A549 (cell line): ENCODE measurements at regions of chr11 and their contacts with region 1.

Region 1: GRCh38 chr11:34653826-34654490 is 33.1 kb downstream of the EHF start:
- DNase-seq: peak; percentile 82 to 98
- ATAC-seq: peak; percentile 91 to 94
- H3K4me3 ChIP-seq: no peak overlapping the region
- H3K27ac ChIP-seq: peak overlapping the region; percentile 94 to 99
- H3K4me1 ChIP-seq: peaks cover 51% of the 10 kb centered on the region
- CTCF ChIP-seq: peak; percentile 48
- EP300 ChIP-seq: peak; percentile 89 to 95
- POLR2A ChIP-seq: no peak
- RAD21 ChIP-seq: peak; percentile 86 to 93

Region 2: DNA sequence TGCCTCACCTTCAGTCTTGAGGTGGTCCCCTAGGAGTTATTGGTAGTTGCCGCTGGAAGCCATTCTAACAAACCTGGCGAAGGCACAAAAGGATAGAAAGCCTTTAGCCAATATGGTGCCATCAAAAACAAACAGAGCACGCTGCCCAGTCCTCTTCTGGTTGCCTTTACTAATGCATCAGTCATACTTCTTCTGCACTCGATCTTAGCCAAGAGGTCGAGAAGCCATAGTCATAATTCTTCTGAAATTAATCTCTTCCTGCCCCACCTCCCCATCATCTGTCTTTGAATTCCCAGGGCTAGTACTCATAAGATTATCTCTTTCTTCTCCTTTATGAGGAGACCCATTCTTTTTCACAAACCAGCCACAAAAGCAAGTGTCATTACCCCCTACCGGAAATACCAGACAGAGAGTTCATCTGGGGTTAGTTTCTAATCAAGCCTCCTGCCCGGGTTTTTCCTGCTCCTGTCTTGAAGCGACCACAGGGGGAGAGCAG is 54.5 kb before region 1 on chr11:
- CTCF ChIA-PET with region 1: interaction called, 27 read pairs
- POLR2A ChIA-PET with region 1: interaction called, 98 read pairs
- DNase-seq: peak; percentile 76 to 88
- ATAC-seq: peak; percentile 44 to 57
- H3K4me3 ChIP-seq: no peak overlapping the region
- H3K27ac ChIP-seq: peak overlapping the region; percentile 98 to 99
- H3K4me1 ChIP-seq: peaks cover 57% of the 10 kb centered on the region
- CTCF ChIP-seq: no peak
- EP300 ChIP-seq: peak; percentile 84 to 96; a peak in 4 of 5 replicates
- POLR2A ChIP-seq: no peak
- RAD21 ChIP-seq: peak in 1 of 2 experiments; percentile 49; a peak in 3 of 5 replicates

Region 3: DNA sequence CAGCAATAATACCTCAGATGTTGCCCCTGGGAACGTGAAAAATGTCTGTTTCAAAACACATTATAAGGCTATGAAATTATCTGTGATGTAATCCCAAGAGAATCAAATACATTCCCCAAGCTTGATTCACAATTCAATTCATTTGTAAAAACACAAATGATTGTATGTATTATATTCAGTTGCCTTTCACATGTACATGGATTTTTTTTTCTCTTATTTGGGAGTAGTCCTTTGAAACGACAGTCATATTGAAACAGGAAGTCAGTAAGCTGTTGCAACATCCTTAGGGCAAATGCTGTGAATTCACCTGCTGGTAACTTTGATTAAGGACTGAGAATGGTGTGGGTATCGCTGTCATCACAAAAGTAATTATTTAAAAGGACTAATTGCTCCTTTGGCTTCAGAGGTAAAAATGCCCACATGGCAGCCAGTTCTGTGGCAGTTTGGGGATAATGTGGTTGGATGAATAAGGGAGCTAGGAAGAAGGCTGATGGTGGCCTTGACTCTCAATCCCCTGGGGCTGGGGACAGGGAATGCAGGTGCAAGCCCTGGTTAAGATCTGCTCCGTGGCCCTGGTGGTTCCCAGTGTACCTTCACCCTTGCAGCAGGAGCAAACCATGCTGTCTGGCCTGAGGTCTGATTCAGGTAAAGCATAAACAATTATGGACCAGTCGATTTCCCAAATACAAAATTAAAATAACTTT is 19.8 kb before region 1 on chr11:
- CTCF ChIA-PET with region 1: interaction called, 68 read pairs
- POLR2A ChIA-PET with region 1: interaction called, 81 read pairs
- DNase-seq: peak in 1 of 2 experiments; percentile 60
- ATAC-seq: peak in 1 of 2 experiments; percentile 29; a peak in 4 of 6 replicates
- H3K4me3 ChIP-seq: no peak overlapping the region
- H3K27ac ChIP-seq: peak overlapping the region; percentile 77 to 94
- H3K4me1 ChIP-seq: peaks cover 82% of the 10 kb centered on the region
- CTCF ChIP-seq: no peak
- EP300 ChIP-seq: peak in 1 of 2 experiments; percentile 34; a peak in 1 of 5 replicates
- POLR2A ChIP-seq: no peak
- RAD21 ChIP-seq: no peak; a peak in 1 of 5 replicates

Region 4: DNA sequence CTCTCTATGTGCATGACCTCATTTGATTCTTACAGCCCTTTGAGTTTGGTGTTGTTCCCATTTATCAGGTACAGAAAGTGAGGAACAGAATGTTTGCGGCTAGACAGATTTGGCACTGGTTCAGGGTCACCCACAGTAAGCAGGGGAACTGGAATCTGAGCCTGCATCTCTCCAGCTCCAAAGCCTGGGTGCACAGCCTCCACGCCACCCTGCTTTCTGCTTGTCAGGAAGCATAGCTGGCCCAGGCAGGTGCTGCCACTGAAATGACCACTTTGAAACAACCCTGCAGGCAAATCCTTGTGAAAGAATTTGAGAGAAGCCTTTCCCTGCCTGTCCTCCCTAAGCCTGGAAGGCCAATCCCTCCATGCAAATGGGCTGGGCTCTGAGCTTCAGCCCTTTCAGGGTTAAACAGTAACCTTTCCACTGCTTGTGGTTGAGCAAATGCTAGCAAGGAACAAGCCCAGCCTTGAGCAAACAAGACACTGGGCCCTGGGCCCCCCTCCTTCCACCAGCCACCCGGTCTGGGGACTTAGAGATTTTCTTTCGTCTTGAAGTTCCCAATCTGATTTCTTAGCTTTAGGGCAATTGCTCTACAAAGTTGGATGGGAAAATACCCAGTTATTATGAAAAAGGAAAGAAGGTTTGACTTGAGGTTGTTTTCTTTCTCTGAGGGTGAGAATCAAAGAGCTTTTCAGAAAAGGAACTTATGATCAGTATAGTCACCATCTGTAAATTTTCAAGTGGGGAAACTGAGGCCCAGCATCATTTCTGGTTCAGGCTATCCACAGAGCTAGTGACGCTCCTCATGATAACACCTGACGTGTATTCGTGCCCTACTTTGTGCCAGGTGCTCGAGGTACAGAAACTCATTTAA is 13.7 kb before region 1 on chr11:
- CTCF ChIA-PET with region 1: interaction called, 68 read pairs
- POLR2A ChIA-PET with region 1: interaction called, 81 read pairs
- DNase-seq: peak; percentile 96 to 98
- ATAC-seq: peak; percentile 96 to 98
- H3K4me3 ChIP-seq: no peak overlapping the region
- H3K27ac ChIP-seq: peak overlapping the region; percentile 94 to 99
- H3K4me1 ChIP-seq: peaks cover 88% of the 10 kb centered on the region
- CTCF ChIP-seq: no peak; the same call in 2 of the 3 replicates
- EP300 ChIP-seq: peak; percentile 83 to 90; a peak in 3 of 5 replicates
- POLR2A ChIP-seq: peak; percentile 33; the same call in 1 of the 2 replicates
- RAD21 ChIP-seq: peak; percentile 39 to 69; a peak in 4 of 5 replicates

Region 5: DNA sequence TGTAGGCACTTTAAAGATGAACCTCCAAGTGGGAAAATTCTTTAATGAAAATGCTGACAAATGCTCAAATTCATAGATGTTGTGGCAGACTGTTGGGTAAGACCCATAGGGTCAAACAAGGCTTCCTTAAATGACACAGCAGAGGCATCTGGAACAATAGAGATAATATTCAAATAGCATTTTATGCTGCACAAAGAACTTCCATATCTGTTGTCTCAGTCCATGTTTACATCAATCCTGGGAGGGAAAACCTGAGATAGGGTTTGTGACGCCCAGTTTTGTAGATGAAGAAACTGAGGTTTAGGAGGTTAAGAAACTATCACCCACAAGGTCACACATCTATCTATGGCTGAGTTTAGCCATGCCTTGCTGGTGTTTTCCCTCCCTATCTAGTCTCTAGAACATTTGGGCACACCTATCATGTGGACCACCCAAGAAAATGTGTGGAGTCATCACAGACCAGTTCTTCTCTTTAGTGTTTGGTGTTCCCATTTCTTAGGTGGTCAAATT is 73.3 kb after region 1 on chr11:
- CTCF ChIA-PET with region 1: no interaction called
- POLR2A ChIA-PET with region 1: no interaction called
- DNase-seq: no peak
- ATAC-seq: no peak
- H3K4me3 ChIP-seq: no peak overlapping the region
- H3K27ac ChIP-seq: no peak overlapping the region
- H3K4me1 ChIP-seq: peaks cover 8% of the 10 kb centered on the region; the same call in 2 of the 3 replicates
- CTCF ChIP-seq: no peak
- EP300 ChIP-seq: no peak
- POLR2A ChIP-seq: no peak
- RAD21 ChIP-seq: no peak

Region 6: GRCh38 chr11:34890812-34891211 is 236.9 kb after region 1 on chr11:
- CTCF ChIA-PET with region 1: interaction called, 13 read pairs
- POLR2A ChIA-PET with region 1: interaction called, 3 read pairs
- DNase-seq: peak in 1 of 2 experiments; percentile 68
- ATAC-seq: peak in 1 of 2 experiments; percentile 67; a peak in 3 of 6 replicates
- H3K4me3 ChIP-seq: no peak overlapping the region
- H3K27ac ChIP-seq: peak overlapping the region; percentile 71 to 76
- H3K4me1 ChIP-seq: peaks cover 43% of the 10 kb centered on the region
- CTCF ChIP-seq: peak; percentile 81
- EP300 ChIP-seq: no peak
- POLR2A ChIP-seq: no peak
- RAD21 ChIP-seq: peak; percentile 88 to 95